ENCODE measurements at regions of chr19 and their contacts with region 1.

Region 1: DNA sequence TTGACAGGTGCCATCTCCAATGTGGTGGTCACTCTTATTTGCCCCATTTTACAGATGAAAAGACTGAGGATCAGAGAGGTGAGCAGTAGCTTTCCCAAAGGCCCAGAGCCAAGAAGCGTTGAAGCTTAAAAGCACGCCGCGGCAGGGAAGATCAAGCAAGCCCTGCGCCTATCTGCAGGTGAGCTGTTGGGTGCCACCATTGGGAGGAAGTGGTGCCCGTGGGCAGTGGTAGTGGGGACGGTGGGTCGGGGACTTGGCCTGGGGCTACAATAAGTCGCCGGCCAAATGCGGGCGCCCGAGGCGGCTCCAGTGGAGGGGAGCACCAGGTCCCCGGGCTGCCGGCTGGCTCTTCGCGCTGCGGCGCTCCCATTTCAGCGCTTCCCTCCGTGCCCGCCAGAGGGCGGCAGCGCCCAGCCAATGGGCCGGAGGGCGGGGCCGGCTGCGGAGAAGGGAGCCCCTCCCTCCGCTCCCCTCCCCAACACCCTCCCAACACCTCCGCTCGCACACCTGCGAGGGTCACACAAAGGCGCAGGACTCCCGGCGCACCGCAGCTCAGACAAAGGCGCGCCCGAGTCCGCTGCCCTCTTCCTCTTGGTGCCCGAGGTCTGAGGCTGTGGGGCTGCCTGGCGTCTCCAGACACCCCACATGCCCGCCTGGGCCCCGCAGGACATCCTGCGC is 744 bp upstream of the POU2F2 start:
- DNase-seq: peak; percentile 61 to 69 (median 68)
- H3K4me3 ChIP-seq: peak overlapping the region; percentile 31 to 82 (median 70)
- H3K27ac ChIP-seq: no peak overlapping the region
- H3K4me1 ChIP-seq: peaks cover 12 to 80% (median 58%) of the 10 kb centered on the region in 4 experiments
- H3K27me3 ChIP-seq: no peaks in the 10 kb centered on the region

Region 2: GRCh38 chr19:42092350-42092749 is 40.6 kb before region 1 on chr19:
- CTCF ChIA-PET with region 1: no interaction called
- POLR2A ChIA-PET with region 1: no interaction called
- DNase-seq: peak; percentile 93 to 98 (median 97)
- H3K4me3 ChIP-seq: peak overlapping the region in 2 of 7 experiments; percentile 11 to 48
- H3K27ac ChIP-seq: peak overlapping the region; percentile 69 to 87
- H3K4me1 ChIP-seq: peaks cover 0 to 23% (median 8%) of the 10 kb centered on the region in 4 experiments
- H3K27me3 ChIP-seq: no peaks in the 10 kb centered on the region

Region 3: GRCh38 chr19:42113641-42114348 is 19.2 kb before region 1 on chr19:
- CTCF ChIA-PET with region 1: interaction called, 23 read pairs
- POLR2A ChIA-PET with region 1: no interaction called
- DNase-seq: no peak
- H3K4me3 ChIP-seq: no peak overlapping the region
- H3K27ac ChIP-seq: no peak overlapping the region
- H3K4me1 ChIP-seq: peaks cover 0 to 12% (median 3%) of the 10 kb centered on the region in 4 experiments
- H3K27me3 ChIP-seq: no peaks in the 10 kb centered on the region

Region 4: GRCh38 chr19:42121656-42122069 is 11.3 kb before region 1 on chr19:
- CTCF ChIA-PET with region 1: interaction called, 12 read pairs
- POLR2A ChIA-PET with region 1: interaction called, 6 read pairs
- DNase-seq: peak; percentile 76 to 94 (median 93)
- H3K4me3 ChIP-seq: peak overlapping the region in 5 of 7 experiments; percentile 15 to 71 (median 46)
- H3K27ac ChIP-seq: peak overlapping the region; percentile 50 to 82
- H3K4me1 ChIP-seq: peaks cover 10 to 37% (median 34%) of the 10 kb centered on the region in 4 experiments
- H3K27me3 ChIP-seq: no peaks in the 10 kb centered on the region

Region 5: GRCh38 chr19:42184401-42184861 is 51.4 kb after region 1 on chr19:
- CTCF ChIA-PET with region 1: interaction called, 66 read pairs
- POLR2A ChIA-PET with region 1: no interaction called
- DNase-seq: peak; percentile 59 to 75 (median 70)
- H3K4me3 ChIP-seq: no peak overlapping the region
- H3K27ac ChIP-seq: no peak overlapping the region
- H3K4me1 ChIP-seq: peaks cover 7 to 33% (median 27%) of the 10 kb centered on the region in 4 experiments
- H3K27me3 ChIP-seq: peaks cover 0 to 17% (median 8%) of the 10 kb centered on the region in 5 experiments